ENCODE measurements at regions of chr21 and their contacts with region 1.

Region 1: GRCh38 chr21:39094847-39095579 is 88.2 kb downstream of the PSMG1 start:
- DNase-seq: no peak
- ATAC-seq: no peak
- H3K4me3 ChIP-seq: no peak overlapping the region
- H3K27ac ChIP-seq: no peak overlapping the region
- H3K4me1 ChIP-seq: no peaks in the 10 kb centered on the region
- H3K27me3 ChIP-seq: no peaks in the 10 kb centered on the region
- CTCF ChIP-seq: no peak
- EP300 ChIP-seq: no peak
- POLR2A ChIP-seq: no peak
- RAD21 ChIP-seq: no peak

Region 2: DNA sequence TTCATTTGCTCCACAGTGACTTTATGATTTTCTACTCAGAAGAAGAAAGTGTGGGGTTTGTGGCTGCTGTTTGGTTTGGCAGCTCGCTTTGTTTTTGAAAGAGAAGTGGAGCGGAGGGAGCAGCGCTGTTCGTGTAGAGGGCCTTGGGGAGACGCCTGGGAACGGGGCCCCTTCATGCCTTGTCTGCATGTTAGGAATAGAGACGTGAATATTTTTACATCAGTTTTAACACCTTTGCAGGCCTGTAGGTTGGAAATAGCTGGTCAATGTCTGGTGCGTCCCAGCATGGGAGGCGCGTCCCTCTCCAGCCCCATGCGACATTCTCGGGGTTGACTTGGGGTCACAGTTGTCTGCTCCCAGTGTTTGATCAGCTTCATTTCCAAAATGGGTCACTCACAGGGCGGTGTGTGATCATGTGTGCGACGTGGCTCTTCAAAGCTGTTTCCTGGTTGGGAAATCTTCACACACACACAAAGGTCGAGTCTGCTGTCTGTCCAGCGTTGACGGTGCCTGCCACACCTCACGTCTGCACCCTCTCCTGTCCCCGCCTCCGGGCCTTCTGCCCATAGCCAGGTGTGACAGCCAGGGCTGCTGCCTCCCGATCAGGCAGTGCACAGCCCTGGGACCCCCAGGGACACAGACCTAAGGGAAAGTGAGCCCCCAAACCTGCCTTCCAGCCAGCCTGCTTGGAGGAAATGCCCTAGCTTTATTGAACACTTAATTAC is 61.0 kb before region 1 on chr21:
- CTCF ChIA-PET with region 1: no interaction called
- POLR2A ChIA-PET with region 1: no interaction called
- RAD21 ChIA-PET with region 1: no interaction called
- SMC1A ChIA-PET with region 1: no interaction called
- in situ Hi-C with region 1: loop called (anchors 10 kb)
- intact Hi-C with region 1: no loop called
- DNase-seq: no peak
- ATAC-seq: no peak
- H3K4me3 ChIP-seq: no peak overlapping the region
- H3K27ac ChIP-seq: no peak overlapping the region
- H3K4me1 ChIP-seq: no peaks in the 10 kb centered on the region
- H3K27me3 ChIP-seq: peaks cover 0 to 3% of the 10 kb centered on the region in 2 experiments; a peak in 1 of 4 replicates
- CTCF ChIP-seq: no peak
- EP300 ChIP-seq: no peak
- POLR2A ChIP-seq: no peak
- RAD21 ChIP-seq: no peak